ENCODE measurements at regions of chr15 and their contacts with region 1.

Region 1: GRCh38 chr15:70036585-70037291 is 61.0 kb downstream of the TLE3 start:
- ATAC-seq: peak in 3 of 8 experiments; percentile 31 to 70 (median 39)
- H3K4me3 ChIP-seq: no peak overlapping the region
- H3K27ac ChIP-seq: no peak overlapping the region
- H3K4me1 ChIP-seq: peaks cover 40 to 42% of the 10 kb centered on the region in 2 donors

Region 2: GRCh38 chr15:69523010-69524001 is 513.4 kb before region 1 on chr15:
- in situ Hi-C with region 1: loop called in 1 of 9 experiments (anchors 25 kb)
- ATAC-seq: peak; percentile 36 to 92 (median 68)
- H3K4me3 ChIP-seq: no peak overlapping the region
- H3K27ac ChIP-seq: no peak overlapping the region
- H3K4me1 ChIP-seq: peaks cover 37 to 43% of the 10 kb centered on the region in 2 donors

Region 3: GRCh38 chr15:70210528-70210927 is 173.8 kb after region 1 on chr15:
- in situ Hi-C with region 1: no loop called
- ATAC-seq: no peak
- H3K4me3 ChIP-seq: no peak overlapping the region
- H3K27ac ChIP-seq: no peak overlapping the region
- H3K4me1 ChIP-seq: peaks cover 18 to 25% of the 10 kb centered on the region in 2 donors